K562 (cell line): ENCODE measurements at regions of chrX and their contacts with region 1.

Region 1: GRCh38 chrX:77910108-77910840 is at the start of gene ATP7A:
- DNase-seq: peak; percentile 88 to 93 (median 90)
- ATAC-seq: peak; percentile 89
- H3K4me3 ChIP-seq: peak within 1 kb of the TSS; percentile 60
- H3K27ac ChIP-seq: peak within 1 kb of the TSS; percentile 78
- H3K4me1 ChIP-seq: peaks cover 0 to 5% of the 10 kb centered on the region in 2 experiments; a peak in 2 of 5 replicates
- H3K27me3 ChIP-seq: no peaks in the 10 kb centered on the region
- CTCF ChIP-seq: peak; percentile 64 to 69 (median 65)
- EP300 ChIP-seq: no peak
- POLR2A ChIP-seq: 0 out of 2 replicates have a peak, but pooled peaks have one; percentile 48
- RAD21 ChIP-seq: peak; percentile 65 to 69
- polyA plus RNA-seq, gene ATP7A: 7.8 to 9.2 TPM

Region 2: GRCh38 chrX:77875372-77875771 is 34.9 kb before region 1 on chrX:
- CTCF ChIA-PET with region 1: no interaction called
- POLR2A ChIA-PET with region 1: no interaction called
- in situ Hi-C with region 1: no loop called
- intact Hi-C with region 1: no loop called
- DNase-seq: no peak
- ATAC-seq: no peak
- H3K4me3 ChIP-seq: no peak overlapping the region
- H3K27ac ChIP-seq: no peak overlapping the region
- H3K4me1 ChIP-seq: no peaks in the 10 kb centered on the region
- H3K27me3 ChIP-seq: no peaks in the 10 kb centered on the region
- CTCF ChIP-seq: no peak
- EP300 ChIP-seq: no peak
- POLR2A ChIP-seq: no peak
- RAD21 ChIP-seq: no peak

Region 3: DNA sequence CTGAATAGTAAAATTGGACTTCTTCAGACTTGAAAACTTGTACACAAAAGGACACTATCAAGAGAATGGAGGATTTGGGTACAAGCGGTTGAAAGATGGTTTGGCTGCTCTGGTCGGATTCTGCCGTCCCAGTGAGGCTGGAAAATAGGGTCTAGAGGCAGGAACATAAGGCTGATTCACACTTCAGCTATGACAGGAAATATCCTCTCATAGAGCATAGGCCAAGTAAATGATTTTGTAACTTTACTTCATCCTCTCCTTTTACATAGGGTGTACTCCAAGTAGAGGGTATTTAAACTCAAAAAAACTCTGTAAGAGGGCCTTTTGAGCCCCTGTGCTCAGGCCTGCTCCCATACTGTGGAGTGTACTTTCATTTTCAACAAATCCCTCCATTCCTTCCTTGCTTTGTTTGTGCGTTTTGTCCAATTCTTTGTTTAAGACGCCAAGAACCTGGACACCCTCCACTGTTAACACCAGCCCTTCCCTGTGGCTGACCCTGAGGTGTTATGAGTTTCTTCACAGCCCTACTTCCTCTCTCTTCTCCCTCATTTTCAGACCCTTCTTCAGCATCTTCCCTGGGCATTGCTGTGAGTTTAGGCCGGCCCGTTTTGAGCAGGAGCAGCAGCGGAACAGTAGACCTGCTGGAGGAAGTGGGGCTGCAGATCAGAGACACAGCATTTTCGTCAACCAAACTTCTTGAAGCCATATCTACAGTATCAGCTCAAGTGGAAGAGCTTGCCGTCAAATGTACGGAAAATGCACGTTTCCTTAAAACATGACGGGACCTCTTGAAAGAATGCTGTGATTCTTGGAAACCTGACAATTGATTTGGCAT is 52.0 kb after region 1 on chrX:
- CTCF ChIA-PET with region 1: no interaction called
- POLR2A ChIA-PET with region 1: no interaction called
- in situ Hi-C with region 1: no loop called
- intact Hi-C with region 1: loop called (anchors 5 kb)
- DNase-seq: no peak
- ATAC-seq: peak; percentile 71
- H3K4me3 ChIP-seq: peak overlapping the region; percentile 11; the same call in 1 of the 2 replicates
- H3K27ac ChIP-seq: peak overlapping the region; percentile 60; the same call in 2 of the 3 replicates
- H3K4me1 ChIP-seq: no peaks in the 10 kb centered on the region; a peak in 2 of 5 replicates
- H3K27me3 ChIP-seq: no peaks in the 10 kb centered on the region
- CTCF ChIP-seq: no peak
- EP300 ChIP-seq: no peak
- POLR2A ChIP-seq: no peak
- RAD21 ChIP-seq: no peak

Region 4: DNA sequence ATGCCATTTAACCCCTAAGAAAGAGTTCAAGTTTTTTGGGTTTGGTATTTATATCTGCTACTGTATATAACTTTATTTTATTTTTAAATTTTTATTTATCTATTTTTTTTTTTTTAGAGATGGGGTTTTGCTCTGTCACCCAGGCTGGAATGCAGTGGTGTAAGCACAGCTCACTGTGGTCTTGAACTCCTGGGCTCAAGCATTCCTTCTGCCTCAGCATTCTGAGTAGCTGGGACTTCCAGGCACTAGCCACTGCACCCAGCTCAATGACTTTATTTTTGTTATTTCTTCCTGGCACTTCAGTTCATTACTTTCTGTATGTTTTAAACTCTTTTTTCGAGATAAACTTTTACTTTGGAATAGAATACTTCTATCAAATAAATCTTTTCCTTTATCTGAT is 101.6 kb after region 1 on chrX:
- CTCF ChIA-PET with region 1: no interaction called
- POLR2A ChIA-PET with region 1: no interaction called
- in situ Hi-C with region 1: no loop called
- intact Hi-C with region 1: no loop called
- DNase-seq: no peak
- ATAC-seq: no peak
- H3K4me3 ChIP-seq: no peak overlapping the region
- H3K27ac ChIP-seq: no peak overlapping the region
- H3K4me1 ChIP-seq: no peaks in the 10 kb centered on the region
- H3K27me3 ChIP-seq: no peaks in the 10 kb centered on the region
- CTCF ChIP-seq: no peak
- EP300 ChIP-seq: no peak
- POLR2A ChIP-seq: no peak
- RAD21 ChIP-seq: no peak

Region 5: GRCh38 chrX:78024349-78025108 is 114.3 kb after region 1 on chrX:
- CTCF ChIA-PET with region 1: no interaction called
- POLR2A ChIA-PET with region 1: interaction called, 3 read pairs
- in situ Hi-C with region 1: loop called (anchors 10 kb)
- intact Hi-C with region 1: loop called (anchors 1 kb)
- DNase-seq: peak; percentile 32 to 56 (median 40)
- ATAC-seq: peak; percentile 97
- H3K4me3 ChIP-seq: no peak overlapping the region
- H3K27ac ChIP-seq: no peak overlapping the region
- H3K4me1 ChIP-seq: no peaks in the 10 kb centered on the region; a peak in 1 of 5 replicates
- H3K27me3 ChIP-seq: no peaks in the 10 kb centered on the region
- CTCF ChIP-seq: peak; percentile 51 to 66 (median 60)
- EP300 ChIP-seq: no peak
- POLR2A ChIP-seq: no peak
- RAD21 ChIP-seq: peak; percentile 49 to 72